ENCODE measurements at regions of chr1 and their contacts with region 1.

Region 1: DNA sequence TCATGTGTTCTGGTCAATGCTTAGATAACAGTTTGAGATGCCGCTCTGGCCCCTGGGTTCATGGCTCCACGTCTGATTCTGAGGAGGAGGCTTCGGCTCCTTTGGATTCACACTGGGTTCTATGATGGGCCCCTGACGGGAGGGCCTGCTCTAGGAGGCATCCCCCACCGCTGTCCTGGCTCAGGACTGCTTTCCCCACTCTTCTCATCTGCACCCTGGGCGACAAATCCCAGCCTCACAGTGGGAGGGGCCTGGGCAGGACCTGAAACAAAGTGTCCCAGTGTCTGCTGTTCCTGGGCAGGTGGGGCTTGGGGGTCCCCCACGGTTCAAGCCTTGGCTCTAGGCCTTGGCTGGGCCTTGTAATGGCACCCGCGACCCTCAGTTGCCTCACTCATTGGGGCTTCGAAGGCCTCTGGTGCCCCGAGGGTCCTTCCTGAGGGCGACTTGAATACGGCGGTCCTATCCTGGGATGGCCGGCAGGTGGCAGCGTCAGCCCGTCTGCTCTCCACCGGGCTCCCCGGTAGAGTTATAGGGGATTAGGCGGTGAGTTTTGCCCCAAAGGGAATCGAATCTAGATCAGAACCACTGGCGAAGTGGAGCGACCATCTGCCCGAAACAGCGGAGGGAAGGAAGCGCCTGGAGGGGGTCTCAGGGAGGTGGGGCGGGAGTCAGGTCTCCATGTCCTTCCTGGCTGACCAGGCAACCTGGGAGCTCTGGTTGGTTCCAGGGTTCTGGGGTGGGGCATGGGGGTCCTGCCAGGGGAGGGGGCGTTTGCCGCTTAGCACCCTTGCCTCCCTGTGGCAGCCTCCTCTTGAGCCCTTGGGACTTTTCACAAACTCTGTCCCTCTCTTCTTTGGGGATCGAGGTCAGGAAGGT is 2.0 kb upstream of the PEX10 start:
- DNase-seq: peak; percentile 80
- H3K4me3 ChIP-seq: no peak overlapping the region
- H3K27ac ChIP-seq: no peak overlapping the region
- H3K4me1 ChIP-seq: peaks cover 16% of the 10 kb centered on the region
- H3K27me3 ChIP-seq: peaks cover 42% of the 10 kb centered on the region
- CTCF ChIP-seq: peak; percentile 98

Region 2: GRCh38 chr1:2502661-2503553 is 88.6 kb after region 1 on chr1:
- CTCF ChIA-PET with region 1: interaction called, 11 read pairs
- POLR2A ChIA-PET with region 1: no interaction called
- intact Hi-C with region 1: no loop called
- DNase-seq: no peak
- H3K4me3 ChIP-seq: no peak overlapping the region
- H3K27ac ChIP-seq: no peak overlapping the region
- H3K4me1 ChIP-seq: no peaks in the 10 kb centered on the region
- H3K27me3 ChIP-seq: no peaks in the 10 kb centered on the region
- CTCF ChIP-seq: no peak

Region 3: DNA sequence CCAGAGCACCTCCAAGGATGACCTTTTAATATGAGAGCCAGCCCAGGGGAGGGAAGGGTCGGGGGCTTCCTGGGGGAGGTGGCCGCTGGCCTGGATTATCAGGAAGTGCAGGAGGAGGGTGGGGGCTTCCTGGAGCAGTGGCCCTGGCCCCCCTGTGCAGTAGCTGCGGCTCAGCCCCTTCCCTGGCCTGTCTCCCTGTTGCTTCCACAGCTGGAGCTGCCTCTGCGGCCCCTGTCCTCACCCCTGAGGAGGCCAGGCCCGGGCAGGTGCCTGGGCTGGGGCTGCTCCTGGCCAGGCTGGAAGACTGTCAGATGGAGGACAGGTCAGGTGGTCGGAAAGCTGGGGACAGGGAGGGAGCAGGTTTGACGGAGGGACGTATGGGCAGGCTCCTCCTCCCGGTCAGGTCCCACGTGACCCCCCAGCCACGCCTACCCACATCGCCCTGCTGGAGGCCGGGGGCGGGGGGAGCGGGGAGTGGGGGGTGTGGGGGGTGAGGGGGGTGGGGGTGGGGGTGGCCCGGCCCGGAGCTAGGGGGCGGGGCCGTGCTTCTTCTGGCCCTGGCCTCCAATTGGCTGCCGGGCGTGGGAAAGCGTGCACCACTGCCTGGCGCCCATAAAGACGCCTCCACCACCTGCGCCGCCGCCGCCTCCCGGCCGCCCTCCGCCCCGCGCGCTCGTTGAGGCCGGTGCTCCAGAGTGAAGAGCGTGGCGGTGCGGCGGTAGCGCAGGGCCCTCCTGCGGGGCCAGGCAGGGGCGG is 131.6 kb after region 1 on chr1:
- CTCF ChIA-PET with region 1: interaction called, 8 read pairs
- POLR2A ChIA-PET with region 1: no interaction called
- intact Hi-C with region 1: loop called (anchors 1 kb)
- DNase-seq: peak; percentile 91
- H3K4me3 ChIP-seq: peak overlapping the region; percentile 49
- H3K27ac ChIP-seq: peak overlapping the region; percentile 76
- H3K4me1 ChIP-seq: peaks cover 29% of the 10 kb centered on the region
- H3K27me3 ChIP-seq: no peaks in the 10 kb centered on the region
- CTCF ChIP-seq: no peak

Region 4: DNA sequence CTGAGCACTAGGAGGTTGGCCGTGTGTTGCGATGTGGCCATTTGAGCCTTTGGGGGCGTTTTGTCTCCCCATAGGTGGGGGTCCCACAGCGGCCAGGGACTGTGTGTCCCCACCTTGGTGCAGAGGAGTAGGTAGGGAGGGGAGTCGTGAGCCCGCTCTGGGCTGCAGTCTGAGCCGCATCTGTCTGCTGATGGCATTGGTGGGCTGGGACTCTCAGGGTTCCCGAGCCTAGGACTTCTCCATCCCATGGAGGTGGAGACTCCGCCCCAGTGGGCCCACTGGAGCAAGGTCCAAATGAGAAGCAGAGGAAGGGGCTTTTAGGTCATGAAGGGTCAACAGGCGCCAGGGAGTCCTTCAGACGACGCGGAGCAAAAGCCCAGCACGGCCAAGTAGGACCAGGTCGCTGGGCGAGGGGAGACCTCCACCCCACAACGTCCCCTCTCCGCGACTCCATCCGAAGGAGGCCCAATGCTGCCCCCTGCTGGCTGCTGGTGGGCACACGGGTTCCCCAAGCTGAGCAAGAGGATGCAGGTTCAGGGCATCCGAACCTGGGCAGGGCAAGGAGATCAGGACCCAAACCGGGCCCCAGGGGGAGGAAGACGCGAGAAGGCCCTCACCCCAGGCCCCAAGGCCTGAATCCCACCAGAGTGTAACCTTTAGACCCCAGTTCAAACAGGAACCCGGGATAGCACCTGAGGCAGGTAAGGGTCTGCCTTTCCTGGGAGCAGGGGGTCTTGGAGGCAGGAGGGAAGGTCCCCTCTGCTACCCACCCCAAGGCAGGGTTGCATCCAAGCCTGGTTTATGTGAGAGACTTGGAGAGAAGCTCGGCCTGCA is 372.2 kb after region 1 on chr1:
- CTCF ChIA-PET with region 1: no interaction called
- POLR2A ChIA-PET with region 1: no interaction called
- intact Hi-C with region 1: loop called (anchors 1 kb)
- DNase-seq: peak; percentile 31
- H3K4me3 ChIP-seq: no peak overlapping the region
- H3K27ac ChIP-seq: no peak overlapping the region
- H3K4me1 ChIP-seq: no peaks in the 10 kb centered on the region
- H3K27me3 ChIP-seq: no peaks in the 10 kb centered on the region
- CTCF ChIP-seq: peak; percentile 74

Measured in A673 (cell line).